GM10248 (cell line): ENCODE measurements at regions of chr6 and their contacts with region 1.

Region 1: DNA sequence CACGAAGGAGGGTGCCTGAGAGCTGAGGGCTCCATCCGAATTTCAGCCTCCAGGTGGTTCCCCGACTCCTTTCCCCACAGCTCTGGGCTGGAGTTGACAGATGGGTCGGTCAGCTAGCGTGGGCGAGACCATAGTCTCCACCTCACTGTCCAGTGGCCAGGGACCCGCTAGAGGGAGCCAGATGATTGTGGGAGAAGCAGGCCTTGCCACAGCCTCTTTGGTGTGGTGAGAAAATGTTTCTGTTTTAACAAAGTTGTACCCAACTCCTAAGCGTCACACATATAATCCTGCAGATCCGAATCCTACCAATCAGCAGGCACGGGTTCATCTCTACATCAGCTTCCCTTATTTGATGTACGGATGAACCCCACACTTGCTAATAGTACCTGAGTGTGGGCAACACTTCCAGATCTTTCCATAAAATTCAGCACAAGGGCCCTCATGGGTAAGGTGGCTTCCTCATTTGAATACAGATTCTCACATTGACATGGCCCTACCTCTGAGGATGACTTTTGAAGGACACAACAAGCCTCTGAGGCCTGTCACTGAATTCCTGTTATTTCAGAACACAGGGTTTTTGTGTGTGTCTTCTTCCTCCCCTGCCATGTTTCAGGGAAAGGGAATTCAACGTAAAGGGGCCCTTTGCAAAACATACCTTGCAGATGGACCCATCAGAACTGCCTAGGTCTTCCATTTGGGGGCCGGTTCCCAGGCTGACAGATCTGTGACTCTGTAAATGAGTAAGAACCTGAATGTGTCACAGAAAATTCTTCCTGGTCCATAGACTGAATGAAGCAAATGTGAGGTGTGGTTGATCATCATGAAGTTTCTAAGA is 103.2 kb upstream of the DUSP22 start:
- DNase-seq: peak; percentile 85
- CTCF ChIP-seq: peak; percentile 87

Region 2: GRCh38 chr6:203661-204060 is 14.6 kb after region 1 on chr6:
- CTCF ChIA-PET with region 1: interaction called, 51 read pairs
- POLR2A ChIA-PET with region 1: no interaction called
- DNase-seq: no peak
- CTCF ChIP-seq: no peak

Region 3: DNA sequence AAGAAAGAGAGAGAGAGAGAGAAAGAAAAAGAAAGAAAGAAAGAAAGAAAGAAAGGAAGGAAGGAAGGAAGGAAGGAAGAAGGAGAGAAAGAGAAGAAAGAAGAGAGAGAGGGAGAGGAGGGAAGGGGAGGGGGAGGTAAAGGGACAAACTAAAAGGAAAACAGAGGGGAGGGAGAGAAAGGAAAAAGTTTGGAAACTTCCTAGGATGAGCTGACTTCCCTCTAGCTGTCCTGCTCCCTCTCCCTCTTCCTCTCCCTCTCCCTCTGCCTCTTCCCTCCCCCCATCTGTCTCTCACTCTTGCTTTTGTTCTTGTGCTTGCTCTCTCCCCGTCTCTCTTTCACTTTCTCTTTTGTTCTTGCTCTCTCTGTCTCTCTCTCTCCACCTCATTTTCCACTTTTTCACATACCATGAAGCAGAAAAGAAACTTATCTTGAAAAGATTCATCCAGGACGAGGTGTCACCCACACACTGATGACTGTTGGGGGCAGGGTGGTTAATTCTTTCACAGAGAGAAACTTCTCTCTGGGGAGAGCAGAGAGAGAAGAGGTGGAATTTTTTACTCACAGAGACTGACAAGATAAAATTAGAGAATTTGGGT is 46.8 kb after region 1 on chr6:
- CTCF ChIA-PET with region 1: interaction called, 620 read pairs
- POLR2A ChIA-PET with region 1: no interaction called
- DNase-seq: no peak
- CTCF ChIP-seq: no peak

Region 4: DNA sequence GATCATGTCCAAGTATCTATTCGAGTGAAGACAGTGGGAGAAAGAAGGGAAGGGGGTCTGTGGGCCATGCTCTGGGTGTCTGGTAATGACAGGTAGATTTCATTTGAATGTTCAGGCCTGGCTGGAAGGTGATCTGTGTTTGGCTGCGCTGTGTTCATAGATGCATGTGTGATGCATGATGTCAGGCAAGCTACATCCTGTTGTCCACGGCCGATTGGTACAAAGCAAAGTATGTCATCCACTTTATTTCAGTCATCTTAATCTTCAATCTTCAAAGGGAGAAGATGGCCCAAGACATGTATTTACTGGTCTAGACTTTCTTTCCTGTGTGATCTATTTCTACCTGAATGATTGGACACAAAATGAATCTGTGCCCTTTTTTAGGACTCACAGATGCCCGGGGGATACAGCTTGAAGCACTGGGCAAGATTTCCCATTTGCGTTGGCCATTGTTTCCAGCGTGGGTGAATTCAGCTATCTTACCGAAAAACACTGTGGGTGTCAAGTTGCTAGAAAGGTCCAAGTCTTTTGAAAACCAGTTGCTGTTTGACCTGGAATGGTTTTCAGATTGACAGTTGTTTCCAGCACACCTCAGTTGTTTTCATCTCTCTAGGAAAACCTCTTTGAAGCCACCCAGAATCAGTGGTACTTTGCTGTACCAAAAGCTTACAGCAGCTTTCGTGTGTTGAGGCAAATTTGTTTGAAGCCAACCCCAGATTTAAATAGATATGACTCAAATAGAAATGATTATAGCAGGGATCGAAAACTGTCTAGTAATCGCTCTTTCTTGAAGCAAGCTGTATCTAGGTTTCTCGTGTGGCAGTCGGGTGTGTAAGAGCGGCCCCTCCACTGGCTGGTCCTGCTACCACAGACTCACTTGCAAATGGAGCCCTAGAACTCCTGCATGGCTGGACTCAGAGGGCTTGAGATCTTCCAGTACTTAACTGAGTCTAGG is 130.4 kb after region 1 on chr6:
- CTCF ChIA-PET with region 1: interaction called, 13 read pairs
- POLR2A ChIA-PET with region 1: interaction called, 4 read pairs
- DNase-seq: peak; percentile 82
- CTCF ChIP-seq: no peak

Region 5: DNA sequence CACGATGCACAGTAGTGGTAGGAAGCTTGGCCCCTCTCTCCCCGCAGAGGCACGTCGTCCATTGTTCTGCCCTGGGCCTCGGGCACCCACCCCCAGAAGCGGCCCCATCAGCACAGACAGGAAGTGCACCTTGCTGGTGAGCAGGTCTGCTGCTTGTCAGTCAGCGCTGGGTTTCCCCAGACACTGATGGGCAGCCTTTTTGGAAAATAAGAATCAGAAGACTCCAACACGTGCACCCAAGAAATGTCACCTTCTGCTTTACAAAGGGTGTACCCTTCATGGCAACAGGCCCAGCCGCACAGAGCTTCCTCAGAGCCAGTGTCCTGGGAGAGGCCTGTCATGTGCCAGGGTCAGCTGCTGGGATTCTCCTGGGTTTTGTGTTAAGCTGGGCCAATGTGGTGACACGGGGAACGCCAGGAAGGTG is 167.8 kb after region 1 on chr6:
- CTCF ChIA-PET with region 1: interaction called, 12 read pairs
- POLR2A ChIA-PET with region 1: no interaction called
- DNase-seq: peak; percentile 90
- CTCF ChIP-seq: no peak